ENCODE measurements at regions of chr7 and their contacts with region 1.

Region 1: GRCh38 chr7:100965723-100966541 is 3.4 kb upstream of the MUC12 start:
- DNase-seq: peak; percentile 21 to 88 (median 52)
- ATAC-seq: peak; percentile 73
- H3K4me3 ChIP-seq: peak overlapping the region; percentile 52
- H3K4me3 Mint-ChIP-seq: peak overlapping the region; percentile 71 to 89 (median 84)
- H3K27ac ChIP-seq: no peak overlapping the region
- H3K27ac Mint-ChIP-seq: peak overlapping the region in 1 of 9 donors; percentile 6
- H3K4me1 ChIP-seq: peaks cover 0 to 17% of the 10 kb centered on the region in 2 donors
- H3K4me1 Mint-ChIP-seq: peaks cover 9 to 24% (median 16%) of the 10 kb centered on the region in 7 donors
- H3K27me3 ChIP-seq: peaks cover 12 to 33% of the 10 kb centered on the region in 2 donors
- H3K27me3 Mint-ChIP-seq: peaks cover 42 to 65% (median 61%) of the 10 kb centered on the region in 5 donors

Region 2: DNA sequence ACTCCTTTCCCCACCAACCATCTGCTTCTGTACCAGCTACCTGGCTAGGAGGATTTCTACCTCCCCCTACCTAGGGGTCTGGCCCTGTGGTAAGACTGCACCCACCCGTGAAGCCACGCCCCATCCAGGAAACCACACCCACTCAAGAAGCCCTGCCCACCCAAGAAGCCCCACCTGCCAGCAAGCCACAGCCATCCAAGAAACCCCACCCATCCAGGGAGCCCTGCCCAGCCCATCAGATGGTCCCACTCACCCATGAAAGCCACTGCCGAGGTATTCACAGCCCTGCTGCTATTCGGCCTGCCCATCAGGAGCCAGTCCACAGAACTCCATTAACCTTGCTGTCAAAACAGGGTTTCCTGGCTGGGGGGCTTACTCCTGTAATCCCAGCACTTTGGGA is 32.2 kb before region 1 on chr7:
- CTCF ChIA-PET with region 1: no interaction called
- POLR2A ChIA-PET with region 1: no interaction called
- intact Hi-C with region 1: no loop called
- DNase-seq: no peak
- ATAC-seq: no peak
- H3K4me3 ChIP-seq: no peak overlapping the region
- H3K4me3 Mint-ChIP-seq: no peak overlapping the region
- H3K27ac ChIP-seq: no peak overlapping the region
- H3K27ac Mint-ChIP-seq: no peak overlapping the region
- H3K4me1 ChIP-seq: no peaks in the 10 kb centered on the region
- H3K4me1 Mint-ChIP-seq: no peaks in the 10 kb centered on the region
- H3K27me3 ChIP-seq: no peaks in the 10 kb centered on the region
- H3K27me3 Mint-ChIP-seq: peaks cover 2 to 29% (median 7%) of the 10 kb centered on the region in 5 donors

Region 3: DNA sequence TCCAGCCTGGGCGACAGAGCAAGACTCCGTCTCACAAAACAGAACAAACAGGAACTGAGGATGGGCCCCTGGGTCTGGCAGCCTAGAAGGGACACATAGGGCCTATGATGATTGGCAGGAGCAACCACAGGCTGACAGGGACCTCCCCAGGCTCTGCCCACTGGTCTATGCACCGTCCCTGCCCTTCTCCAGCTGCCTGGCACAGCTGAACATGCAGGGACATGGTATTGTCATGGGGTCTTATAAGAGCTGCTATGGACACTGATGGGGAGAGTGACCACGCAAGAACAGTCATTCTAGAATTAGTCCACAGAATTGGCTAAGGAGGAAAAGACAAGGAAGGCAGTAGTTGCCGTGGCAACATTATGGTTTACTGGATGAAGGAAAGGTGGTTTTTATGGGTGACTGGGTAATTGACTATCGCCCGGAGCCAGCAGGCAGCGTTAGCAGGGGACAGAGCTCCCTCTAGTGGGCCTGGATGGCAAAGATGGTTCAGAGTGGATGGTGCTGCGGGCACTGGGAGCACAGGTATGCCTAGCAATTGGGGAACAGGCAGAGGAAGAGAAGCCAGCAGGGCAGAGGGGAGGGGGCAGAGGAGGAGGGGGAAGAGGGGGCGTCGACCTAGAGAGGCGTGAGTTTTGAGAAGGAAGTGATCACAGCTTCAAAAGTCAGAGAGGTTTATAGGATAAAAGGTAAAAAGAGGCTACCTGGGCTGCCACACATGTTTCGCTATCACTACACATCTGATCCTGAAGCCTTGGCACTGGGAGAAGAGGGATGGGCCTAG is 111.6 kb after region 1 on chr7:
- CTCF ChIA-PET with region 1: no interaction called
- POLR2A ChIA-PET with region 1: no interaction called
- intact Hi-C with region 1: loop called (anchors 1 to 5 kb)
- DNase-seq: peak; percentile 66 to 83 (median 78)
- ATAC-seq: peak; percentile 99
- H3K4me3 ChIP-seq: no peak overlapping the region
- H3K4me3 Mint-ChIP-seq: peak overlapping the region in 1 of 10 donors; percentile 5
- H3K27ac ChIP-seq: no peak overlapping the region
- H3K27ac Mint-ChIP-seq: peak overlapping the region in 1 of 9 donors; percentile 4
- H3K4me1 ChIP-seq: no peaks in the 10 kb centered on the region
- H3K4me1 Mint-ChIP-seq: peaks cover 0 to 9% (median 6%) of the 10 kb centered on the region in 7 donors
- H3K27me3 ChIP-seq: no peaks in the 10 kb centered on the region
- H3K27me3 Mint-ChIP-seq: peaks cover 0 to 26% (median 7%) of the 10 kb centered on the region in 5 donors

Measured in naive thymus-derived CD4-positive, alpha-beta T cell (primary cell).